ENCODE measurements at regions of chr13 and their contacts with region 1.

Region 1: GRCh38 chr13:42333613-42334328 is 61.8 kb downstream of the AKAP11 start:
- DNase-seq: no peak
- ATAC-seq: peak; percentile 95
- H3K4me3 Mint-ChIP-seq: no peak overlapping the region
- H3K27ac Mint-ChIP-seq: no peak overlapping the region
- H3K4me1 Mint-ChIP-seq: peaks cover 11% of the 10 kb centered on the region
- H3K27me3 Mint-ChIP-seq: no peaks in the 10 kb centered on the region; the same call in 1 of the 2 replicates
- CTCF ChIP-seq: peak; percentile 47; the same call in 1 of the 2 replicates

Region 2: GRCh38 chr13:42478531-42479156 is 144.9 kb after region 1 on chr13:
- CTCF ChIA-PET with region 1: interaction called, 12 read pairs
- POLR2A ChIA-PET with region 1: no interaction called
- DNase-seq: no peak
- ATAC-seq: peak; percentile 84
- H3K4me3 Mint-ChIP-seq: no peak overlapping the region
- H3K27ac Mint-ChIP-seq: no peak overlapping the region
- H3K4me1 Mint-ChIP-seq: peaks cover 2% of the 10 kb centered on the region; the same call in 1 of the 2 replicates
- H3K27me3 Mint-ChIP-seq: no peaks in the 10 kb centered on the region
- CTCF ChIP-seq: no peak

Region 3: GRCh38 chr13:42594970-42595571 is 261.3 kb after region 1 on chr13:
- CTCF ChIA-PET with region 1: interaction called, 13 read pairs
- POLR2A ChIA-PET with region 1: no interaction called
- DNase-seq: peak; percentile 60
- ATAC-seq: no peak; the same call in 1 of the 2 replicates
- H3K4me3 Mint-ChIP-seq: peak overlapping the region; percentile 15; the same call in 1 of the 2 replicates
- H3K27ac Mint-ChIP-seq: peak overlapping the region; percentile 78
- H3K4me1 Mint-ChIP-seq: peaks cover 81% of the 10 kb centered on the region
- H3K27me3 Mint-ChIP-seq: no peaks in the 10 kb centered on the region
- CTCF ChIP-seq: peak; percentile 65

Measured in WTC11 (cell line).